RWPE1 (cell line): ENCODE measurements at regions of chr1 and their contacts with region 1.

Region 1: DNA sequence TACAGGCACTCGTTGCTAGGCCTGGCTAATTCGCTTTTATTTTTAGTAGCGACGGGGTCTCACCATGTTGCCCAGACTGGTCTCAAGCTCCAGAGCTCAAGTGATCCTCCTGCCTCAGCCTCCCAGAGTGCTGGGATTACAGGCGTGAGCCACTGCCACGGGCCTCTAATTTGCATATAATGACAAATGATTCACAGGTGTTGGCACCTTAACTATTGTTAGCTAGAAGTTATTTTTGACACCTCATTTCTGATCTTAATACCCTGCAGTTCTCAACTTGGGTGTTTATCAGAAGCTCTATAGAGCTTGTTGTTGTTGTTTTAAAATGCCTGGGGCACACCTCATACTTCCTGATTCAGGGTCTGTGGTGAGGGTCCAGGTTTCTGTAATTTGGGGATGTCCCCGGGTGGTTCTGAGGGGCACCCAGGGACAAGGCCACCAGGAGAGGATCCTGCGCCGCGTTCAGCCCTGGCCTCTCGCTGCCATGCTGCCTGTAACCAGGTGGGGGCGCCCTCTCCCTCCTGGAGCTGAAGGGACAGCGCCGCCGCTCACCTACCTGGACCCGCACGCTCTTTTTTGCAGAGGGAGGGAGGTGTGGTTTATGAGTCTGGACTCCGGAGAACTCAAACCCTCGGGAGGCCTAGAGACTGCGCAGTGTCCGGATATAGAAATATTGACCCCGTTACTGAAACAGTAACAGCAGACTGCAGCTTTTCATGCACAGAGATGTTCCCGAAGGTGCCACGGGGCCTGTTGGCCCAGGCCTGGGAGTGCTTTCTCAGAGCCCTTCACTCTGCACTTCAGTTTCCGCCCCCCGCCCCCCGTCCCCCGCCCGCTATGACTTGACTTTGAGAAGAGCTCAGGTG is 23.0 kb upstream of the NEK2 start:
- DNase-seq: peak; percentile 67
- H3K27ac ChIP-seq: no peak overlapping the region
- CTCF ChIP-seq: peak; percentile 95

Region 2: GRCh38 chr1:211680752-211681327 is 17.6 kb before region 1 on chr1:
- CTCF ChIA-PET with region 1: interaction called, 11 read pairs
- POLR2A ChIA-PET with region 1: no interaction called
- DNase-seq: peak; percentile 84
- H3K27ac ChIP-seq: no peak overlapping the region
- CTCF ChIP-seq: peak; percentile 80

Region 3: DNA sequence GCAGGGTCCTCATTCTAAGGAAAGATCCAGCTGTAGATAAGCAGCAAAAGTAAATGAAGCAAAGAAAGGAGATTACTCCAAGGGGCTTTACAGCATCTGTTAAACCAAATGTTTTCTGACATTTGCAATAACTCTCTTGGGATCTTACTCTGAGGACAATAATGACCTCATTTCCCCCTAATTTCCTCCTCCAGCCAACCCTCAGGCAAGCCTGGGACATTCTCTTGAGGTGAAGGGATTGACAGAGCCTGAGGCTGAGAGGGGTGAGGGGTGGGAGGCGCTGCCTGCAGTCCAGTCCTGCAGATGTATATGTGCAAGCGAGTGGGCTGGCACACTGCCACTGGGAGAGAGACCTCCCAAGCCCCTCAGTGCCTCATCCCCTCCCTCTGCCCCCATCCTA is 17.6 kb after region 1 on chr1:
- CTCF ChIA-PET with region 1: no interaction called
- POLR2A ChIA-PET with region 1: no interaction called
- DNase-seq: no peak
- H3K27ac ChIP-seq: no peak overlapping the region
- CTCF ChIP-seq: no peak

Region 4: DNA sequence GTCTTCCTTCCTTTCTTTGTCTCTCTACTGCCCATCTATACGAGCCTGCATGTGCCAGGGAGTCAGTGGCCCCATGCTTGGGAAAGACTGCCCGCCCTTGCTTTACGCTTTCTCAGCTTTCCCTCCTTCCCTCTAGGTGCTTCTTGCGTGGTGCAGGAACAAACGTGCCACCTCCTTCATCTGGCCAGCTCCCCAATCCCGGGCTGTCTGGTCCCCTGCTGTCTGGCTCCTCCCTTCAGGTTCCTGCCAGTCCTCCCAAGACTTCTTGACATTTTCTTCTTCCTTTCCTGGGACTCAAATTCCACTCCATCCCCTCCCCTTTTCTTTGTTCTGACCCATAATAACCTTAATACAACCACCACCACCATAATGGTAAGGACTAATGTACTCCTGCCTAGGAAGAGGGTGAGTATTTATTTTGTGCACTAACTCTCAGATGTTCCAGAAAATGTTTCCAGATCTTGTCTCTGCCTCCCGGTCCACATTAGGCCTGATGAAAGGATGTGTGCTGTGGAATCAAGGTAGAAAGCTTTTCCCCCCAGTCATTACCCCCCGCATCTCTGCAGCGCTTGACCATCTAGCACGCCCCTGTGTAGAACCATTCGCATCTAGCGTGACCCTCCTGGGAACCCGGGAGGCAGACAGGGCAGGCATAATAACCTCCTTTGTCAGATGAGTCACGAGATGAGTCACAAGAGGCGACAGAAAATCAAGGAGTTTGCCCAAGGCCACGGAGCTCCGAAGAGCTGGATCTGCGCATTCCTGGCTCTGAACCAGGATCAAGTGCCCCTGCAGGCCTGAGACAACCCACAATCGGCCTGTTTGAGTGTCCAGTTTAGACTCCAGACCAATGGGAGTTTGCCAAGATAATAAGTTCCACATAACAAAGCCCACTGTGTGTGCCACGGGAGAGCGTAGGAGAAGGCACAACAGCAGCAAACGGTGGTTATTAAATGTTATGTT is 37.1 kb after region 1 on chr1:
- CTCF ChIA-PET with region 1: interaction called, 10 read pairs
- POLR2A ChIA-PET with region 1: no interaction called
- DNase-seq: peak; percentile 88
- H3K27ac ChIP-seq: peak overlapping the region; percentile 69
- CTCF ChIP-seq: no peak

Region 5: GRCh38 chr1:211944733-211945500 is 246.5 kb after region 1 on chr1:
- CTCF ChIA-PET with region 1: interaction called, 20 read pairs
- POLR2A ChIA-PET with region 1: no interaction called
- DNase-seq: peak; percentile 95
- H3K27ac ChIP-seq: peak overlapping the region; percentile 61
- CTCF ChIP-seq: peak; percentile 95

Region 6: DNA sequence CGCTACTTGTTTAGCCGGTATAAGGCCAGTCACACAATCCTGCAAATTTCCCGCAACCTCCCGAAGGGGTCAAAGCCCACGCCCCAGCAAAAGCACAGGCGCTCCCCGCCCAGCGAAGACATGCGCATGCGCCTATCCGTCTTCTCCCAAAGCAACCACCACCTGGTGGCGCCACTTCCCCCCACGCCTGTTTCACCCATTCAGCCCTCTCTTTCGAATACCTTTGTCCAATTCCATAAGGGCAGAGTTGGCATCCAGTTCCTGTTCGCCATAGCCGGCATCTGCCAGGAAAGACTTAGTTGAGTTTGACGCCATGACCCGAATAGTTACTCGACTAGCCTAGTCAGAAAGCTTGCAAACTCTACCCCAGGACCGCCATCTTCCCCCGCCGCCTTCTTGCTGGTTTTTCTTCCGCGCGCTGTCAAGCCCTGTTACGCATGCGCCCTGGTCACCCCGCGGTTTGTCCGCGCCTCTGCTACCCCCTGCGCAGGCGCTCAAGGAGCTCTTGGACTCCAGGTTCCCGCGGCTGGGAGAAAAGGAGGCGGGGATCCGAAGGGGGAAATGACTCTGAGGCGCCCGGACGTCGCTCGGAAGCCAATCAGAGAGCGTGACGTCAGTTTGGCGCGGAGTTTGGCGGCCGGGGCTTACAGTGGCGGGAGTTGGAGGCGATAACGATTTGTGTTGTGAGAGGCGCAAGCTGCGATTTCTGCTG is 336.9 kb after region 1 on chr1 and contains the starts of genes DTL and INTS7:
- CTCF ChIA-PET with region 1: interaction called, 14 read pairs
- POLR2A ChIA-PET with region 1: no interaction called
- DNase-seq: peak; percentile 100
- H3K27ac ChIP-seq: peak within 1 kb of the TSS; percentile 92
- CTCF ChIP-seq: peak; percentile 95

Region 7: GRCh38 chr1:213083112-213083445 is 1384.7 kb after region 1 on chr1:
- CTCF ChIA-PET with region 1: no interaction called
- POLR2A ChIA-PET with region 1: no interaction called
- DNase-seq: peak; percentile 35
- H3K27ac ChIP-seq: no peak overlapping the region
- CTCF ChIP-seq: no peak